Activated CD4-positive, alpha-beta T cell treated with anti-CD3 and anti-CD28 coated beads for 36 hours (primary cell): ENCODE measurements at regions of chr12 and their contacts with region 1.

Region 1: DNA sequence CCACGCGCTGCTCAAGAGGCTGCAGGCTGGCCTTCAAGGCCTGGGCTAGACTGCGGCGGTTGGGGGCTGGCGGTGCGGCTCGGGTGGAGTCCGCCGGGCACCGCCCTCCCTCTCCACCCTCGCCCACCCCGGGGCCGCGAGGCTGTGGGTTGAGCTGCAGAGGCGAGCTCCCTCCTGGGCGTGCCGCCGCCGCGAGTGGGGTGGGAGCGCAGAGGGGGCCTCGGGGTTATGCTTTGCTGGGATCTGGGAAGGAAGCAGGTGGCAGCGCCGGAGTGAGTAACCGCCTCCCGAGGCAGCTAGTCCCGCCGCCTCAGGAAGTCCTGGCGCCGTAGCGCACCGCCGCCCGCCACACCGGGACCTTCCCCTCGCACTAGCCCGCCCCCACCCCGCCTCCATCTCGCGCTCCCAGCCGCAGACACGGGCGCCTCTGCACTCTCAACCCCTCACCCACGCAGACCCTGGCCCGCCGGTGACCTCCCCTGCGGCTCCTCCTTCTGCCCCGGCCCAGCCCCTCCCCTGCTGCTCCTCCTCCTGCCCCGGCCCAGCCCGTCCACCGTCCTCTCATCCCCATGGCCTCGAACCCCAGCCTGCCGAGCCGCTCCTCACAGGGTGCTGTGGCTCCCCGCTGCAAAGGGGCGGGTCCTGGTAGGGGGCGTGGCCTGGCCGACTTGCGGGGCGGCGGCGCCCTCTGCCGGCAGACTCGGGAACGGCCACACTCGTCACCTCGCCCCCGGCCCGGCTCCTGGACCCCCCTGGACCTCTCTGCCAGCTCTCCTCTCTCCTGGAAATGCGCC is 16.6 kb downstream of the TAMALIN start:
- DNase-seq: peak; percentile 97
- ATAC-seq: peak; percentile 69
- H3K4me3 Mint-ChIP-seq: peak overlapping the region; percentile 77
- H3K27ac Mint-ChIP-seq: peak overlapping the region; percentile 97
- H3K4me1 Mint-ChIP-seq: peaks cover 37% of the 10 kb centered on the region
- H3K27me3 Mint-ChIP-seq: no peaks in the 10 kb centered on the region

Region 2: GRCh38 chr12:51905471-51906429 is 117.6 kb before region 1 on chr12:
- CTCF ChIA-PET with region 1: no interaction called
- POLR2A ChIA-PET with region 1: no interaction called
- intact Hi-C with region 1: no loop called
- DNase-seq: no peak
- ATAC-seq: no peak
- H3K4me3 Mint-ChIP-seq: no peak overlapping the region
- H3K27ac Mint-ChIP-seq: no peak overlapping the region
- H3K4me1 Mint-ChIP-seq: peaks cover 2% of the 10 kb centered on the region
- H3K27me3 Mint-ChIP-seq: peaks cover 20% of the 10 kb centered on the region

Region 3: GRCh38 chr12:51926718-51927117 is 96.7 kb before region 1 on chr12:
- CTCF ChIA-PET with region 1: interaction called, 3 read pairs
- POLR2A ChIA-PET with region 1: no interaction called
- intact Hi-C with region 1: loop called (anchors 1 kb)
- DNase-seq: peak; percentile 81
- ATAC-seq: peak; percentile 61
- H3K4me3 Mint-ChIP-seq: no peak overlapping the region
- H3K27ac Mint-ChIP-seq: no peak overlapping the region
- H3K4me1 Mint-ChIP-seq: peaks cover 11% of the 10 kb centered on the region
- H3K27me3 Mint-ChIP-seq: no peaks in the 10 kb centered on the region

Region 4: DNA sequence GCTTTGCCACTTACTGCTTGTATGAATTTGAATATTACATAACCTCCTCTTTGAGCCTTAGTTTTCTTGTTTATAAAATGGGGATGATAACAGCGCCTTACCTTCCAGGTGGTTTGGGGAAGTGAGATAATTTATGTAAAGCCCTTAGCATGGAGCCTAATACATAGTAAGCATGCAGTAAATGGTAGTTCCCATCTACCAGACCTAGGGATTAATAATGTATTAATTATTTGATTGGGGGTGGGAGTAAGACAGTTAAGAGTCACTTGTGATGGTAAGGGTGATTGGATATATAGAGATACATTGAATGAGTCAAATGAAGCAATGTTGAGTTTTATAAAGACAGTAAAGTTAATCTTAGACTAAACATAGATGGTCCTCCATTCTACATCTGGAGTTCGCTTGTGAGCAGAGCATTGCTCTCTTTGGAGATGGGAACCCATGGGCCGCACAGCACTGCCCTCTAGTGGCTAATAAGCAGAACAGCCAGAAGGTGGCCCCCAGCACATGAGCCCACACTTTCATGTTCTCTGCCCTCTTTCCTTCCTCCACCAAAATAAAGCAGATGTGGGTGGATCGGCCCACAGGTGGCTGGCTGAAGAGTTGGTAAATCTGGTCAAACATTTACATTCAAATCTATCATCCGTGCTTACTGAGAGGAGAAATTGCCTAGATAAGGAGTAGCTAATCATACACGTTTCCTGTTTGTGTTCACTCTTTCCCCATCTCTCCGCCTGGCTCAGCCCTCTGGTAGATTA is 43.1 kb before region 1 on chr12:
- CTCF ChIA-PET with region 1: interaction called, 50 read pairs
- POLR2A ChIA-PET with region 1: interaction called, 3 read pairs
- intact Hi-C with region 1: no loop called
- DNase-seq: peak; percentile 81
- ATAC-seq: peak; percentile 96
- H3K4me3 Mint-ChIP-seq: no peak overlapping the region
- H3K27ac Mint-ChIP-seq: peak overlapping the region; percentile 17
- H3K4me1 Mint-ChIP-seq: peaks cover 34% of the 10 kb centered on the region
- H3K27me3 Mint-ChIP-seq: no peaks in the 10 kb centered on the region

Region 5: DNA sequence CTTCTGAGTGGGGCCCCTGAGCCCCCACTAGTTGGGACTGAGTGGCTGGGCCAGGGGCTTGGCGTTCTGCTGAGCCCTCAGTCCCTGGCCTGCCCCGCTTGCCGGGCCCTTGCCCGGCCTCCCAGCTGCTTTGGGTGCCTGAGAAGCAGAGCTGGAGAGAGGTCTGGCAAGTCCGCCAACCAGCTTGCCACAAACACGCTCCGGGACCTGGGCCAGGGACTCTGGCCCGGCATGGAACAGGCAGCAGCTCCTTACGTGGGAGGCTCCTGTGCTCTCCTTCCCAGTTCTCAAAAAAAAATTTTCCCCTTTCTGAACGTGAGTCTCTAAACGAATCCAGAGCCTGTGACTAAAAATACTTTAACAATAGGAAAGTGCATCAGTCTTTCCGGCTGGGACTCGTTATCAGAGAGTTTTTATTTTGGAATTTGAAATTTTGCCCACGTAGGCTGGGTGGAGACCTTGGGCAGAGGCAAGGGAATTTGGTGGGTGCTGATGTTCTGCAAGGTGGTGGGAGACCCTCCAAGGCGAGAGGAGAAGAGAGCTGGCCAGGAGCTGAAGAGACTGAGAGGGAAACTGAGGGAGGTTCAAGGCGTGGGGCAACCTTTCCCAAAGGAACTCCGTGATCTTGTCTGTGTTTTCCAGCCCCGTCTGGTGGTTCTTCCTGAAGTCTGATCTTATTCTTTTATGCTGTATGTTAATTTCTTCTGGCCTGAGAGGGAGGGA is 21.0 kb after region 1 on chr12:
- CTCF ChIA-PET with region 1: interaction called, 124 read pairs
- POLR2A ChIA-PET with region 1: interaction called, 4 read pairs
- intact Hi-C with region 1: no loop called
- DNase-seq: no peak
- ATAC-seq: no peak
- H3K4me3 Mint-ChIP-seq: no peak overlapping the region
- H3K27ac Mint-ChIP-seq: no peak overlapping the region
- H3K4me1 Mint-ChIP-seq: peaks cover 33% of the 10 kb centered on the region
- H3K27me3 Mint-ChIP-seq: no peaks in the 10 kb centered on the region

Region 6: DNA sequence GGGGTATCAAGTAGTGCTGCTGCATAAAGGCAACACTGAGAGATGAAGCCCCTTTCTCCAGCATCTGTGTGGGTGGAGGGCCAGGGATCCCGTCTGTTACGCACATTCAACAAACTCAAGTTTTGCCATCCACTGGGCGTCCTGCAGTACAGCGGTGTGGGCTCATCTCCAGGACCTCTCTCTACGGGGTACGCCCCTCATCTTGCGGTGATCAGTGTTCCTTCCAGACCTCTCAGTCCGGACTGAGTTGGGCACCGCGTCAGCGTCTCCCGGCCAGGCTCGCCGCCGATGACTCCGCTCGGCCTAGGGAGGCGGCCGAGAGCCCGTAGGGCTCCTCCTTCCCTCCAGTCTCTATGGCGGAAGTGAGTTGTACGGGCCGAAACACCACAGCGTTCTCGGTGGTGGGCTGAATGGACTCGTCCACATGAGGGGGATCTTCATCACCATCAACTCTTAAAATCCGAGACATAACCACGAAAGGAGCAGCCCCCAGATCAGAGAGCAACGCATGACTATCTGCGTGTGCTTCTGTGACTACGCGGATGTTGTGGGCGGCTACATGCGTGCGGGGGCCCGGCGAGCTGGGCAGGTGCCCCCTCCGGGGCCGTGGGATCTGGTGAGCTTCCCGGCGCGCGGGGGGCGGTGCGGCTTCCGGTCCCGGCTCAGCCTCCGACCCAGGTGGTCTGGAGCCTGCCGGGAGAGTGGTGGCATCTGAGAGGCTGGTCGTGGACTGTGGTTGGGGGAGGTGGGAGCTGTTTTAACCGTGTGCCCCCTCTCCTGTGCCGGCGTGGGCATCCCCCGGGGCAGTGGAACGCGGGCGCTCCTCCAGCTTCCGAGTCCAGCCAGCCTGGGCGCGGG is 46.2 kb after region 1 on chr12 and contains the start of gene ATG101:
- CTCF ChIA-PET with region 1: interaction called, 253 read pairs
- POLR2A ChIA-PET with region 1: interaction called, 6 read pairs
- intact Hi-C with region 1: loop called (anchors 1 kb)
- DNase-seq: peak; percentile 92
- ATAC-seq: peak; percentile 95
- H3K4me3 Mint-ChIP-seq: peak within 1 kb of the TSS; percentile 99
- H3K27ac Mint-ChIP-seq: peak within 1 kb of the TSS; percentile 99
- H3K4me1 Mint-ChIP-seq: peaks cover 56% of the 10 kb centered on the region
- H3K27me3 Mint-ChIP-seq: no peaks in the 10 kb centered on the region
- total RNA-seq, gene ATG101: 24.0 to 30.7 TPM

Region 7: DNA sequence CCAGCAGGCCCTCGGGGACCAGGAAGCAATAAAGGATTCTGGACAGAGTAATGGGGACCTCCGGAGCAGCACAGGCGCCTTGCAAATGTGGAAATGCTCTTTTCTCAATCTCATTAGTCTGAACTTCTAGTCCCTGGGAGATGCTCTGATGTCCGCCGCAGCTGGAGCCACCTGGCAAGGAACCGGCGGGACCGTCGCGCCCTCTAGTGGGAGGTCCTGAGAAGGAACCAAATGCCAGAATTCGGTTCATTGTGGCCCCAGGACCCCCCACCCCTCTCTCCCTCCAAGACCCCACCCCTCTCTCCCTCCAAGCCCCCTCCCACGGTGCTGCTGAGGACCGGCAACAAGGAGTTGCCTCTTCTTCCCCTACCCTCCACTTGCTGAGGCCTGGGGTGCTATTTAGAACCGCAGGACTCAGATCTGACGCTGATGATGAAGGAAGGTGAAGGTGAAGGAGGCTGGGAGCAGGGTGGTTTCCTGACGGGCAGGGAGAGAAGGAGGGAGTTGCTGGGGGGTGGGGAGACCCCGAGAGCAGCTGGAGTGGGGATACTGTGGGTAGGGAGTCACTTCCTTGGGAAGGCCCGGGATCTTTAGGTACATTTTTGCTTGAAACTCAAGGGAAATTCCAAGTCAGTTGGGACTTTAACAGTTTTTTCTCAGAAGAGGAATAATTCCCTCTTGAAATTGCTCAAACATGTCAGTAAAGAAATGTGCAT is 98.6 kb after region 1 on chr12:
- CTCF ChIA-PET with region 1: interaction called, 55 read pairs
- POLR2A ChIA-PET with region 1: interaction called, 4 read pairs
- intact Hi-C with region 1: loop called (anchors 1 kb)
- DNase-seq: peak; percentile 84
- ATAC-seq: no peak
- H3K4me3 Mint-ChIP-seq: no peak overlapping the region
- H3K27ac Mint-ChIP-seq: no peak overlapping the region
- H3K4me1 Mint-ChIP-seq: peaks cover 19% of the 10 kb centered on the region
- H3K27me3 Mint-ChIP-seq: peaks cover 20% of the 10 kb centered on the region

Region 8: DNA sequence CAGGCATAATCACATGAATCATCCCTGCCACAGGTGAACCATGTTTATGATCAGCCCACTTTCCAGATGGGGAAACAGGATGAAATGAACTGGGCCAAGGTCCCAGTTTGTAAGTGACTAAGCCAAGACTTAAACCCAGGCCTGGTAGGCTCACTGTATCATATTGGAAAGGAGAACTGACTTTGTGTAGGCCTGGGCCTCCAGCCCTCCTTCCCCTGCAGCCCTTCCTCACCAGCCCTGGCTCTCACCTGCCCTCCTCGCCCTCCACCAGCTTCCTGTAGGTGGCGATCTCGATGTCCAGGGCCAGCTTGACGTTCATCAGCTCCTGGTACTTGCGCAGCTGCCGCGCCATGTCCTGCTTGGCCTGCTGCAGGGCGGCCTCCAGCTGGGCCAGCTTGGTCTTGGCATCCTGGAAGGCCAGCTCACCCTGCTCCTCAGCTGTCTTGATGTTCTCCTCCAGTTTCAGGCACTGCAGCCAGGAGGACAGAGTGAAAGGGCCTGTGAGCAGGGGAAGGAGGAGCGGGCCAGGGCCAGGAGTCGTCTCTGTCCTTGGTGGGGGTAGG is 148.7 kb after region 1 on chr12:
- CTCF ChIA-PET with region 1: no interaction called
- POLR2A ChIA-PET with region 1: no interaction called
- intact Hi-C with region 1: no loop called
- DNase-seq: peak; percentile 62
- ATAC-seq: peak; percentile 43
- H3K4me3 Mint-ChIP-seq: no peak overlapping the region
- H3K27ac Mint-ChIP-seq: no peak overlapping the region
- H3K4me1 Mint-ChIP-seq: no peaks in the 10 kb centered on the region
- H3K27me3 Mint-ChIP-seq: no peaks in the 10 kb centered on the region